ENCODE measurements at regions of chr6 and their contacts with region 1.

Region 1: GRCh38 chr6:4155848-4156466 is 20.6 kb upstream of the ECI2 start:
- DNase-seq: no peak
- ATAC-seq: peak; percentile 84
- H3K4me3 Mint-ChIP-seq: no peak overlapping the region
- H3K27ac Mint-ChIP-seq: peak overlapping the region; percentile 5
- H3K4me1 Mint-ChIP-seq: peaks cover 34% of the 10 kb centered on the region
- H3K27me3 Mint-ChIP-seq: no peaks in the 10 kb centered on the region
- CTCF ChIP-seq: peak; percentile 68

Region 2: DNA sequence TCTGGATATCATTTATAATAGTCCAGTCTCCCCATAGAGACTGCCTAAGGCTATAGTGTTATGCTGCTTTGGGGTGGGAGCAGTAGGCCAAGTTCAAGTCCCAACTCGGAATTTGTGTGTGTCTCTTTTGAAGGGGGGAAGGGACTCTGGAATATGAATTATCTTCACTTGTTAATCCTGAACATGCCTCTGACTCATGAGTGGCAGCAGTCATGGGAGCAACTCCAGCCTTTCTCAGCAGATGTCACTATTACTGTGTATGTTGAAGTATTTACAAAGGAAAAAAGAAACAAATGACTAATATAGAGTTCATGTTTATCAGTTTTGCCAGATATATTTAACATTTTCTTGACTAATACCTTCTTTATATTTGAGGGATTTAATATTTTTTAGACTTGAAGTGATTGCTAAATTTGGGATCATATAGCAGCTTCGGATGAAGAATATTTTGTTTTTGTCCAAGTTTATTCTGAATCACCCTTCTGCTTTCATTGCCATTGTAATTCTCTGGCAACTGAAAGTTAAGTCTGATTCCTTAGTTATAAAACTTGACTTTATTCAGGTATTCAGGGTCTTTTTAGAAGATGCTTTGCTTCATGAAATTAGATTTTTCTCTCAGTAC is 100.4 kb before region 1 on chr6:
- CTCF ChIA-PET with region 1: interaction called, 40 read pairs
- POLR2A ChIA-PET with region 1: no interaction called
- intact Hi-C with region 1: loop called (anchors 1 kb)
- DNase-seq: no peak
- ATAC-seq: no peak
- H3K4me3 Mint-ChIP-seq: no peak overlapping the region
- H3K27ac Mint-ChIP-seq: no peak overlapping the region
- H3K4me1 Mint-ChIP-seq: no peaks in the 10 kb centered on the region
- H3K27me3 Mint-ChIP-seq: no peaks in the 10 kb centered on the region
- CTCF ChIP-seq: no peak

Region 3: DNA sequence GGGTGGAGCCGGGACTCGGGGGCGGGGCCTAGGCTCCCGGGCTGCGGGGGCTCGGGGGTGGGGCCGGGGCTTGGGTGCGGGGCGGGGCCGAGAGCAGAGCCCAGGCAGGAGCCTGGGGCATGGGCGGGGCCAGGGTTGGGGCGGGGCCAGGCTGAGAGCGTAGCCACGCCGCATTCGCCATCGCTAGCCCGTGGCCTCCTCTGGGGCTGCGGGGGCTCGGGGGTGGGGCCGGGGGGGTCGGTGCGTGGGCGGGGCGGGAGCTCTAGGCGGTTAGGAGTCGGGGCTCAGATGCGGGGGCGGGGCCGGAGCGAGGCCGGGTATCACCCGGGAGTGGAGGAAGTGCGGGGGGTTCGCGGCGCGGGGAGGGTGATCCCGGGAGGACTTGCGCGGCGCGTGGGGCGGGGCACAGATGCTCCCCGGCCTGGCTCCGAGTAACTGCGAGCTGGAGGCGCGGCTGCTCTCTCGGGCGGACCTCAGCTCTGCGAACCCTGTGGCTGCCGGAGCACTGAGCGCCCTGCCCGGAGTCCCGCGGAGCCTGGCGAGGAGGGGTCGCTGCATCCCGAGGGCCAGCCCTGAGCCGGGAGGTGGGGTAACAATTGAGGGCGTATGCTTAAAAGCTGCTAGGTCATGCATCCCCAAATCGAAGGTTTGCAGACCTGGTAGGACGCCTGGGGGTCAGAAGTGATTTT is 20.1 kb before region 1 on chr6:
- CTCF ChIA-PET with region 1: interaction called, 12 read pairs
- POLR2A ChIA-PET with region 1: interaction called, 32 read pairs
- intact Hi-C with region 1: loop called (anchors 1 kb)
- DNase-seq: peak; percentile 83
- ATAC-seq: peak; percentile 92
- H3K4me3 Mint-ChIP-seq: peak overlapping the region; percentile 85
- H3K27ac Mint-ChIP-seq: peak overlapping the region; percentile 76
- H3K4me1 Mint-ChIP-seq: peaks cover 27% of the 10 kb centered on the region
- H3K27me3 Mint-ChIP-seq: no peaks in the 10 kb centered on the region
- CTCF ChIP-seq: no peak